ENCODE measurements at regions of chr5 and their contacts with region 1.

Region 1: GRCh38 chr5:76483433-76483832 is 80.3 kb downstream of the IQGAP2 start:
- DNase-seq: no peak
- H3K4me3 ChIP-seq: no peak overlapping the region
- H3K27ac ChIP-seq: no peak overlapping the region
- H3K4me1 ChIP-seq: peaks cover 7 to 54% (median 41%) of the 10 kb centered on the region in 4 experiments
- H3K27me3 ChIP-seq: no peaks in the 10 kb centered on the region

Region 2: GRCh38 chr5:76495870-76496269 is 12.4 kb after region 1 on chr5:
- CTCF ChIA-PET with region 1: interaction called, 13 read pairs
- POLR2A ChIA-PET with region 1: no interaction called
- DNase-seq: no peak
- H3K4me3 ChIP-seq: no peak overlapping the region
- H3K27ac ChIP-seq: no peak overlapping the region
- H3K4me1 ChIP-seq: peaks cover 0 to 28% (median 9%) of the 10 kb centered on the region in 4 experiments
- H3K27me3 ChIP-seq: no peaks in the 10 kb centered on the region

Region 3: GRCh38 chr5:76503929-76504328 is 20.5 kb after region 1 on chr5:
- CTCF ChIA-PET with region 1: interaction called, 14 read pairs
- POLR2A ChIA-PET with region 1: no interaction called
- DNase-seq: no peak
- H3K4me3 ChIP-seq: no peak overlapping the region
- H3K27ac ChIP-seq: no peak overlapping the region
- H3K4me1 ChIP-seq: peaks cover 7 to 26% (median 15%) of the 10 kb centered on the region in 4 experiments
- H3K27me3 ChIP-seq: no peaks in the 10 kb centered on the region